Heart right ventricle (tissue), 16 donors: ENCODE measurements at regions of chr16 and their contacts with region 1.

Region 1: DNA sequence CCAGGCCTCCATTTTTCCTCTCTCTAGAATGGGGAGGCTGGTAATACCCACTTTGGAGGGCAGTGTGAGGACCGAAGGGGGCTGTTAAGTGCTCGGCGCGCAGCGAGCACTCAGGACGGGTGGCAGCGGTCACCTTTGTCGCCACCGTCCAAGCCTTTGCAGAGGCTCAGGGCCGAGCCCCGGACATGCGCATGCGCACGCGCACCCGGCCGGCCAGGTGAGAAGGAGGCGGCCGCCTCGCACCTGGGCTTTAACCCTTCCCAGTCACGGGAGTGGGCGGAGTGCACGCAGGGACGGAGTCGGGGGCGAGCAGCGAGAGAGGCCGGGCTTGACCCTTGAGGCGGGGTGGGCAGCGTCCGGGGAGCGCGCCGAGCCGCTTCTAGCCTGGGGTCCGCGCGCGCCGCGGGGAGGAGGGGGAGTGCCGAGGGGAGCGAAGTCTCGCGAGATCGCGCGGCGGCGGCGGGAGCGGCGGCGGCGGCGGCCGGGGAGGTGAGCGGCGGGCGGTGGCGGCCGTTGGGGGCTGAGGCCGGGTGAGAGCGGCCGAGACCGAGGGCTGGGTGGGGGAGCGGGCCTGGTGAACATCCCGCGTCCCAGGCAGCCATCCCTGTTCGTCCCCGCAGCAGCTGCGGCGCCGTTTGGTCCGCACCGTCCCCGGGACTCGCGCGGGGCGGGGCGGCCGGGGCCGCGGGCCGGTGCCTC is at the start of gene MRTFB:
- DNase-seq: peak; percentile 77 to 87
- ATAC-seq: peak; percentile 80 to 95 (median 92)
- H3K4me3 ChIP-seq: peak within 1 kb of the TSS; percentile 73 to 99 (median 92)
- H3K27ac ChIP-seq: peak within 1 kb of the TSS; percentile 53 to 94 (median 86)
- H3K4me1 ChIP-seq: peaks cover 0 to 37% (median 19%) of the 10 kb centered on the region in 9 donors
- H3K27me3 ChIP-seq: no peaks in the 10 kb centered on the region
- CTCF ChIP-seq: no peak
- total RNA-seq, gene MRTFB: 20.9 to 41.8 (median 33.0) TPM

Region 2: GRCh38 chr16:14003074-14003570 is 67.9 kb before region 1 on chr16:
- intact Hi-C with region 1: loop called in 4 of 10 experiments (anchors 5 to 10 kb)
- DNase-seq: peak; percentile 55 to 80
- ATAC-seq: peak; percentile 57 to 86 (median 72)
- H3K4me3 ChIP-seq: peak overlapping the region in 8 of 10 donors; percentile 17 to 48 (median 42)
- H3K27ac ChIP-seq: peak overlapping the region in 9 of 10 donors; percentile 62 to 84 (median 75)
- H3K4me1 ChIP-seq: peaks cover 8 to 73% (median 61%) of the 10 kb centered on the region in 9 donors
- H3K27me3 ChIP-seq: no peaks in the 10 kb centered on the region
- CTCF ChIP-seq: peak in 4 of 9 donors; percentile 21 to 39 (median 31)

Region 3: GRCh38 chr16:14196539-14196938 is 125.5 kb after region 1 on chr16:
- intact Hi-C with region 1: no loop called
- DNase-seq: no peak
- ATAC-seq: peak in 4 of 8 donors; percentile 48 to 71 (median 56)
- H3K4me3 ChIP-seq: no peak overlapping the region
- H3K27ac ChIP-seq: peak overlapping the region in 5 of 10 donors; percentile 17 to 61 (median 33)
- H3K4me1 ChIP-seq: peaks cover 0 to 81% (median 47%) of the 10 kb centered on the region in 9 donors
- H3K27me3 ChIP-seq: no peaks in the 10 kb centered on the region
- CTCF ChIP-seq: no peak